CD4-positive, alpha-beta memory T cell (primary cell): ENCODE measurements at regions of chr5 and their contacts with region 1.

Region 1: DNA sequence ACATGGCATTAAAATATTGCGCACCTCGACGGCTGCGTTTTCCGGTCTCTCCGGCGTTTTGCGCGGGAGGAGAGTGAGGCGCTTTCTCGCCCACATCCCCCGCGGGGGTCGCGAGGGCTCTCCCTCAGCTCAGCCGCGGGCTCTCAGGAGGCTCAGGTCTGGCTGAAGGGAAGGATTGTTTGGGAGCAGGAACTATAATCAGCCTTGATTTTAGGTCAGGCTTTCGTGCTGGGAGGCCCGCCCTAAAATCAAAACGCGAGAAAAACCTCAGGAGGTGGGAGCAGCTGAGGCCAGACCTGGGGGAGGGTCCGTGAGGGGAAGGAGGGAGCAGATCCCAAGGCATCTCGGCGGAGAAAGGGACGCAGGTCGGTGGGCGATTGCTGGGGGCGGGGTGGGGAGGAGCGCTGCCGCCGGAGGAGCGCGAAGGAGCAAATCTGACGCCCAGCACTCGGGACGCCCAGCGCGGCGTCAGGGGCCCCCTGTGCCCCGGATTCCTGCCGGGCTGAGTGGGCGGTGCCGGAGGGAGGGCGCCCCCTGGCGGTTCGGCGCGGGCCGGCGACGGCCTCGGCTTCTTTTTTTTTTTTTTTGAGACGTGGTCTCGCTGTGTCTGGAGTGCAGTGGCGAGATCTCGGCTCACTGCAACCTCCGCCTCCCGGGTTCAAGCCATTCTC is 18.7 kb upstream of the RNF130 start:
- DNase-seq: peak; percentile 69 to 85 (median 81)
- H3K4me3 ChIP-seq: peak overlapping the region; percentile 48 to 52
- H3K4me3 Mint-ChIP-seq: peak overlapping the region; percentile 74 to 90 (median 87)
- H3K27ac ChIP-seq: peak overlapping the region; percentile 49
- H3K27ac Mint-ChIP-seq: peak overlapping the region; percentile 69 to 91 (median 80)
- H3K4me1 ChIP-seq: peaks cover 13% of the 10 kb centered on the region
- H3K4me1 Mint-ChIP-seq: peaks cover 11 to 29% (median 16%) of the 10 kb centered on the region in 4 donors
- H3K27me3 ChIP-seq: no peaks in the 10 kb centered on the region
- H3K27me3 Mint-ChIP-seq: peaks cover 1 to 5% of the 10 kb centered on the region in 2 donors

Region 2: DNA sequence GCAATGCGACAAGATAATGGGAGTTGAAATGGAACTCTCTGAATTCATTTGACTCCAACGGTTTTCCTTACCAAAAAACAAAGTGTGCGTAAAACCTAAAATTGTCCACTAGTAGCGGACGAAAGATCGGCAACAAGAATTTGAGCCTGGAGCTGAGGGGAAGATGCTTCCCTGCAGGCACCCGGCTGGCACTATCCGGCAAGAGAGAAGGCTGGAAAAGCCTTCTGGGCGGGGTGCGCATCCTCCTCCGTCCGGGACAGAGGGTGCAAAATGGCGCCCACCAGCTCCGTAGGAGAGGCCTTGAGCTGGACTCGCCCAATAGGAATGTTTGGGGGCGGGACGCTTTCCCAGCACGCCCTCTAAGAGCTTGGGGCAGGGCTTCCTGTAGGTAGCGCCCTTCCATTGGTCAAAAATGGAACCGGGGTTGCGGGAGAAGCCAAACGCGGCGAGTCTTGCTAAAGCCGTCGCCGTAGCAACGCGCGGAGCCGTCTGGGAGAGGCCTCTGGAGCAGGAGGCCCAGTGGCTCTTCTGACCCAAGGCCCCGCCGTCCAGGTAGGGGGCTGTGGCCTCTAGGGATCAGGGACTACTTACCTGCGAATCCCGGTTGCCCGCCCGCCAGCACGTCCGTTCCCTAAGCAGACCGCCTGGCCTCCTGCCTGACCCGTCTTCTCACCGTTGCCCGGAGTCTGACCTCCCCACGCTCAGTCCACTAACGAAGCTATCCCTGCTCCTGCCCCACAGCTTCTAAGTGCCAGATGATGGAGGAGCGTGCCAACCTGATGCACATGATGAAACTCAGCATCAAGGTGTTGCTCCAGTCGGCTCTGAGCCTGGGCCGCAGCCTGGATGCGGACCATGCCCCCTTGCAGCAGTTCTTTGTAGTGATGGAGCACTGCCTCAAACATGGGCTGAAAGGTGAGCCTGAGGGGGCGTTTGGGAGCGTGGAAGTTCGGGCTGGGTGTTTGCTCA is 530.7 kb before region 1 on chr5:
- CTCF ChIA-PET with region 1: no interaction called
- POLR2A ChIA-PET with region 1: no interaction called
- intact Hi-C with region 1: loop called (anchors 5 kb)
- DNase-seq: peak; percentile 85 to 97 (median 92)
- H3K4me3 ChIP-seq: peak overlapping the region; percentile 50 to 64
- H3K4me3 Mint-ChIP-seq: peak overlapping the region; percentile 84 to 98 (median 90)
- H3K27ac ChIP-seq: peak overlapping the region; percentile 62
- H3K27ac Mint-ChIP-seq: peak overlapping the region; percentile 80 to 96 (median 93)
- H3K4me1 ChIP-seq: peaks cover 11% of the 10 kb centered on the region
- H3K4me1 Mint-ChIP-seq: peaks cover 16 to 28% (median 24%) of the 10 kb centered on the region in 4 donors
- H3K27me3 ChIP-seq: no peaks in the 10 kb centered on the region
- H3K27me3 Mint-ChIP-seq: no peaks in the 10 kb centered on the region

Region 3: GRCh38 chr5:179858586-179859427 is 231.4 kb before region 1 on chr5 and contains the start of gene MRNIP:
- CTCF ChIA-PET with region 1: no interaction called
- POLR2A ChIA-PET with region 1: no interaction called
- intact Hi-C with region 1: loop called (anchors 5 kb)
- DNase-seq: peak; percentile 83 to 90 (median 86)
- H3K4me3 ChIP-seq: peak within 1 kb of the TSS; percentile 95 to 96
- H3K4me3 Mint-ChIP-seq: peak within 1 kb of the TSS; percentile 94 to 98 (median 97)
- H3K27ac ChIP-seq: peak within 1 kb of the TSS; percentile 66
- H3K27ac Mint-ChIP-seq: peak within 1 kb of the TSS; percentile 87 to 94 (median 92)
- H3K4me1 ChIP-seq: peaks cover 12% of the 10 kb centered on the region
- H3K4me1 Mint-ChIP-seq: peaks cover 7 to 30% (median 12%) of the 10 kb centered on the region in 4 donors
- H3K27me3 ChIP-seq: no peaks in the 10 kb centered on the region
- H3K27me3 Mint-ChIP-seq: no peaks in the 10 kb centered on the region
- total RNA-seq, gene MRNIP: 125 to 129 TPM

Region 4: GRCh38 chr5:179907570-179908324 is 182.5 kb before region 1 on chr5 and contains the start of gene TBC1D9B:
- CTCF ChIA-PET with region 1: no interaction called
- POLR2A ChIA-PET with region 1: no interaction called
- intact Hi-C with region 1: loop called (anchors 5 kb)
- DNase-seq: peak; percentile 76 to 82 (median 78)
- H3K4me3 ChIP-seq: peak within 1 kb of the TSS in 1 of 2 donors; percentile 57
- H3K4me3 Mint-ChIP-seq: peak within 1 kb of the TSS; percentile 85 to 92 (median 88)
- H3K27ac ChIP-seq: peak within 1 kb of the TSS; percentile 54
- H3K27ac Mint-ChIP-seq: peak within 1 kb of the TSS; percentile 78 to 94 (median 84)
- H3K4me1 ChIP-seq: peaks cover 23% of the 10 kb centered on the region
- H3K4me1 Mint-ChIP-seq: peaks cover 7 to 38% (median 15%) of the 10 kb centered on the region in 4 donors
- H3K27me3 ChIP-seq: no peaks in the 10 kb centered on the region
- H3K27me3 Mint-ChIP-seq: no peaks in the 10 kb centered on the region
- total RNA-seq, gene TBC1D9B: 84.3 to 85.0 TPM

Region 5: DNA sequence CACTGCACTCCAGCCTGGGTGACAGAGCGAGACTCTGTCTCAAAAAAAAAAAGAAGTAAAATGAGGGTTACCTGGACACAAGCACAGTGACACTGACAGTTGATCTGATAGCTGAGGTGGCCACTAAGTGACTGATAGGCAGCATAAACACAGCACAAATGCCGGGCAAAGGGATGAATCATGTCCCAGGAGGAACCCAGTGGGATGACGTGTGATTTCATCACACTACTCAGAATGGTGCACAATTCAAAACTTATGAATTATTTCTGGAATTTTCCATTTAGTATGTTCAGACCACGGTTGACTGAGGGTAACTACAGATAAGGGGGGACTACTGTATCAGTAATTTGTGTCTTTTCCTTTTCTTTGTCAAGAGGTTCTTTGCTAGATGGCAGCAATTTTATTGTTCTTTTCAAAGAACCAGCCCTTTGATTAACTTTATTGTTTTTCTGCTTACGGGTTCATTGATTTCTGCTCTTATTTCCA is 15.6 kb after region 1 on chr5:
- CTCF ChIA-PET with region 1: no interaction called
- POLR2A ChIA-PET with region 1: no interaction called
- intact Hi-C with region 1: no loop called
- DNase-seq: no peak
- H3K4me3 ChIP-seq: no peak overlapping the region
- H3K4me3 Mint-ChIP-seq: no peak overlapping the region
- H3K27ac ChIP-seq: no peak overlapping the region
- H3K27ac Mint-ChIP-seq: no peak overlapping the region
- H3K4me1 ChIP-seq: no peaks in the 10 kb centered on the region
- H3K4me1 Mint-ChIP-seq: no peaks in the 10 kb centered on the region
- H3K27me3 ChIP-seq: no peaks in the 10 kb centered on the region
- H3K27me3 Mint-ChIP-seq: peaks cover 9 to 10% of the 10 kb centered on the region in 2 donors

Region 6: GRCh38 chr5:180209137-180209581 is 118.9 kb after region 1 on chr5 and contains the start of gene RASGEF1C:
- CTCF ChIA-PET with region 1: no interaction called
- POLR2A ChIA-PET with region 1: no interaction called
- intact Hi-C with region 1: no loop called
- DNase-seq: peak in 4 of 5 donors; percentile 45 to 57 (median 46)
- H3K4me3 ChIP-seq: no peak within 1 kb of the TSS
- H3K4me3 Mint-ChIP-seq: peak within 1 kb of the TSS; percentile 5 to 68 (median 58)
- H3K27ac ChIP-seq: no peak within 1 kb of the TSS
- H3K27ac Mint-ChIP-seq: no peak within 1 kb of the TSS
- H3K4me1 ChIP-seq: peaks cover 6% of the 10 kb centered on the region
- H3K4me1 Mint-ChIP-seq: peaks cover 4 to 11% (median 6%) of the 10 kb centered on the region in 4 donors
- H3K27me3 ChIP-seq: peaks cover 14% of the 10 kb centered on the region
- H3K27me3 Mint-ChIP-seq: peaks cover 33 to 38% of the 10 kb centered on the region in 2 donors
- total RNA-seq, gene RASGEF1C: not detected

Region 7: DNA sequence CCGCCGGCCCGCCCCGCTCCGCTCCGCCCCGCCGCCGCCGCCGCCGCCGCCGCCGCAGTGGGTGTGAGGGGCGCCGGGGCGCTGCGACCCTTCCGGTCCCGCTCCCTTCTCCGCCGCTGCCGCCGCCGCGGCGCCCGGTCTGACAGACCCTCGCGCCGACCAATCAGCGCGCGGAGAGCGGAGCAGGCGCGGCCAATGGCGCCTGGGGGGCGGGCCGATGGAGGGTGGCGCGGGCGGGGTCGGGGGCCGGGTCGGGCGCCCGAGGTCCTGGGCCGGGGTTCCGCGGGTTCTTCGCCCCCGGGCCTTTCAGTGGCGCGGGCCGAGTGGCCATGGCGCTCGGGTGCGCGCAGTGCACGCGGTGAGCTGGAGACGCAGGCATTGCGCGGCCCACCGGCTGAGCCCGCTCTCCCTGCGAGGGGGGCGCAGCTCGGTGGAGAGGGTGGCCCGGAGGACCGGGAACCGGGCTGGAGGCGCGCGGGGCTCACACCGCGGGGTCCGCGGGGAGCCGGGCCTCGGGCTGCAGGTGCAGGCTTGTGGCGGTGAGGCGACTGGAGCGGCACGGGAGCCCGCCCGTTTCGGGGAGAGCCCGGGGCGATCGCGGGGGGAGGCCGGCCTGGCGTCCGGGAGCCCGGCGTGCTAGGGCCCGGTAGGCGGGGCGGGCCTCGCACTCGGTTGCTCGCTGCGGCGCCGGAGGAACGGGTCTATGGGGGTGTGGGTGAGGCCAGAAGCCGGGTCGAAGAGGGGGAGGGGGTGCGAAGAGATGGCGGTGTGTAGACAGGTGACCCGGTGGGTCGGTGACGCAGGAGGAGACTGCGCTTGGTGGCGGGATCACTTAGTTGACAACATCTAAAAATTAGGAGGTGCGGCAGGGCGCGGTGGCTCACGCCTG is 202.0 kb after region 1 on chr5 and contains the start of gene MAPK9:
- CTCF ChIA-PET with region 1: no interaction called
- POLR2A ChIA-PET with region 1: no interaction called
- intact Hi-C with region 1: no loop called
- DNase-seq: peak; percentile 84 to 95 (median 88)
- H3K4me3 ChIP-seq: peak within 1 kb of the TSS in 1 of 2 donors; percentile 74
- H3K4me3 Mint-ChIP-seq: peak within 1 kb of the TSS; percentile 95 to 100 (median 99)
- H3K27ac ChIP-seq: peak within 1 kb of the TSS; percentile 92
- H3K27ac Mint-ChIP-seq: peak within 1 kb of the TSS; percentile 94 to 100 (median 100)
- H3K4me1 ChIP-seq: peaks cover 34% of the 10 kb centered on the region
- H3K4me1 Mint-ChIP-seq: peaks cover 32 to 62% (median 47%) of the 10 kb centered on the region in 4 donors
- H3K27me3 ChIP-seq: no peaks in the 10 kb centered on the region
- H3K27me3 Mint-ChIP-seq: no peaks in the 10 kb centered on the region
- total RNA-seq, gene MAPK9: 39.1 TPM